ENCODE measurements at regions of chr6 and their contacts with region 1.

Region 1: GRCh38 chr6:13811627-13812358 is 2.6 kb downstream of the MCUR1 start:
- DNase-seq: no peak
- H3K4me3 Mint-ChIP-seq: no peak overlapping the region
- H3K27ac Mint-ChIP-seq: no peak overlapping the region
- H3K4me1 Mint-ChIP-seq: peaks cover 33% of the 10 kb centered on the region
- H3K27me3 Mint-ChIP-seq: no peaks in the 10 kb centered on the region

Region 2: DNA sequence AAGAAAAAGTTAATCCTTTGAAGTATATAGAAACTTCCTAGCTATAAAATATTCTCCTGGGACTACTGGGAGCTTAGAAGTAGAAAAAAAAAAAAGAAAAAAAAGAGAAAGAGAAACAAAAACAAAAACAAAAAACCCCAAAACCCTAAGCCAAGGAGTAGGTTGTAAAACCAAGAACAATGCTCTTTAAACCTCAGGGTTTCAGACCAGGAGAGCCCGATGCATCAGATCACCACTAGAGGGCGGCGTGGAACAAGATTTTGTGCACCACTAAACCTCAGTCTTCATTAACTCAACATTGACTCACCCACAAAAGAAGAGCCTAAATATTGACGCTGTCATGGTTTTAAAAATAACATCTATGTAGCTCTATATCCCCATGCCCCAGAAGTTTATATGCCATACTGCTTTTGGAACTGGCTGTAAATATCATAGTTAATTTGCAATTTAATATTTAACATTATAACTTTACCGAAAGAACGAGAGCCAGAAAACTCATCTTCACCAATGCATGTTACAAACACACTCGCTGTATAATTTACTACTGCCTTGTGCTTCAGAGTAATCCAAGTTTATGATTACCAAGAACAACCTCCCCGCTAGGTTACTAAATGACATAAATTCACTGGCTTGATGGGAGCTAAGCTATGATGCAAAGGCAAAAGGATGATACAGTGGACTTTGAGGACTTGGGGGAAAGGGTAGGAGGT is 16.6 kb before region 1 on chr6:
- CTCF ChIA-PET with region 1: interaction called, 14 read pairs
- DNase-seq: peak; percentile 90
- H3K4me3 Mint-ChIP-seq: no peak overlapping the region
- H3K27ac Mint-ChIP-seq: no peak overlapping the region
- H3K4me1 Mint-ChIP-seq: peaks cover 9% of the 10 kb centered on the region
- H3K27me3 Mint-ChIP-seq: no peaks in the 10 kb centered on the region

Region 3: GRCh38 chr6:13838616-13839015 is 26.8 kb after region 1 on chr6:
- CTCF ChIA-PET with region 1: no interaction called
- DNase-seq: no peak
- H3K4me3 Mint-ChIP-seq: no peak overlapping the region
- H3K27ac Mint-ChIP-seq: no peak overlapping the region
- H3K4me1 Mint-ChIP-seq: no peaks in the 10 kb centered on the region
- H3K27me3 Mint-ChIP-seq: peaks cover 11% of the 10 kb centered on the region

Measured in activated naive CD4-positive, alpha-beta T cell treated with anti-CD3 and anti-CD28 coated beads, Interleukin-2, amount 10 ng/mL, durations not matched to agents 7 days and 5 days (primary cell).